ENCODE measurements at regions of chr11 and their contacts with region 1.

Region 1: DNA sequence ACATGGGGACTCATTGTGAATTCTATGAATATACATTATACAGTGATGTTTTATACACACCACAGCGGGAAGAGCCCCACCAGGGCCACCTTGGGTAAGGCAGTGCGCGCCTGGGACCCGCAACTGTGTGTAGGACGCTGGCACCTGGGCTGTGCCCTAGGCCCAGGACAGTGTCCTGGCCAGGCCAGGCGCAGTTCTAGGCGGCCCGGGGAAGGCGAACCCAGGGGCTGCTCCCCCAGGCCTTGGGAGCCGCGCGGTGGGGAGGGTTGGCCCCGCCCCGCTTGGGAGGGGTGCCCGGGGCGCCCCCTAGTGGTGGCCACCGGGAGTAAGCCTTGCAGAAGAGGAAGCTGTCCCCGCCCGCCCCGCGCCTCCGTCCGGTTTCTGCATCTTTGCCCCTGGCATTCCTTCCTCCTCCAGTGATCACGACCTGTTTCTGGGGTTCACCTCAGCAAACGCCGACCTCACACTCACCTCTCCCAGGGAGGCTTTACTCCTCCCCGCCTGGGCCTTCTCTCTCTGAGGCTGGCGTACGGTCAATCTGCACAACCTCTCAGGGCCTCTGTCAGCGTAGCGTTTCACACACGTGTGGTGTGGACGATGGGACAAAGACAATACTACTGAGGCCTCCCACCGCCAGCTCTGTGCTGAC is 9.5 kb upstream of the EHD1 start:
- DNase-seq: no peak
- ATAC-seq: peak; percentile 97
- H3K4me3 ChIP-seq: 0 out of 2 replicates have a peak overlapping the region, but pooled peaks have one; percentile 3
- H3K27ac ChIP-seq: peak overlapping the region; percentile 27; the same call in 1 of the 2 replicates
- H3K4me1 ChIP-seq: peaks cover 12% of the 10 kb centered on the region
- H3K27me3 ChIP-seq: no peaks in the 10 kb centered on the region
- CTCF ChIP-seq: peak; percentile 93 to 96 (median 96)
- EP300 ChIP-seq: no peak
- POLR2A ChIP-seq: no peak
- RAD21 ChIP-seq: peak; percentile 42

Region 2: GRCh38 chr11:64864473-64865285 is 23.2 kb before region 1 on chr11:
- CTCF ChIA-PET with region 1: interaction called, 1,208 read pairs
- POLR2A ChIA-PET with region 1: interaction called, 620 read pairs
- RAD21 ChIA-PET with region 1: interaction called, 253 read pairs
- SMC1A ChIA-PET with region 1: interaction called, 226 read pairs
- in situ Hi-C with region 1: no loop called
- intact Hi-C with region 1: no loop called
- DNase-seq: no peak
- ATAC-seq: peak; percentile 59
- H3K4me3 ChIP-seq: peak overlapping the region; percentile 44
- H3K27ac ChIP-seq: peak overlapping the region; percentile 99
- H3K4me1 ChIP-seq: peaks cover 91% of the 10 kb centered on the region
- H3K27me3 ChIP-seq: no peaks in the 10 kb centered on the region
- CTCF ChIP-seq: no peak
- EP300 ChIP-seq: peak in 1 of 2 experiments; percentile 26; a peak in 2 of 4 replicates
- POLR2A ChIP-seq: peak; percentile 78
- RAD21 ChIP-seq: no peak

Region 3: GRCh38 chr11:64872790-64873488 is 14.9 kb before region 1 on chr11:
- CTCF ChIA-PET with region 1: interaction called, 1,208 read pairs
- POLR2A ChIA-PET with region 1: interaction called, 620 read pairs
- RAD21 ChIA-PET with region 1: interaction called, 253 read pairs
- SMC1A ChIA-PET with region 1: interaction called, 12 read pairs
- in situ Hi-C with region 1: no loop called
- intact Hi-C with region 1: no loop called
- DNase-seq: no peak
- ATAC-seq: peak; percentile 2
- H3K4me3 ChIP-seq: peak overlapping the region; percentile 62
- H3K27ac ChIP-seq: peak overlapping the region; percentile 35
- H3K4me1 ChIP-seq: peaks cover 61% of the 10 kb centered on the region
- H3K27me3 ChIP-seq: no peaks in the 10 kb centered on the region
- CTCF ChIP-seq: no peak
- EP300 ChIP-seq: no peak
- POLR2A ChIP-seq: no peak
- RAD21 ChIP-seq: no peak

Region 4: GRCh38 chr11:64900263-64900678 is 12.4 kb after region 1 on chr11:
- CTCF ChIA-PET with region 1: interaction called, 15 read pairs
- POLR2A ChIA-PET with region 1: no interaction called
- RAD21 ChIA-PET with region 1: interaction called, 4 read pairs
- SMC1A ChIA-PET with region 1: interaction called, 3 read pairs
- in situ Hi-C with region 1: no loop called
- intact Hi-C with region 1: no loop called
- DNase-seq: no peak
- ATAC-seq: peak; percentile 96
- H3K4me3 ChIP-seq: no peak overlapping the region
- H3K27ac ChIP-seq: peak overlapping the region; percentile 46
- H3K4me1 ChIP-seq: peaks cover 9% of the 10 kb centered on the region
- H3K27me3 ChIP-seq: no peaks in the 10 kb centered on the region
- CTCF ChIP-seq: no peak
- EP300 ChIP-seq: 0 out of 4 replicates have a peak, but pooled peaks of 1 of the 2 experiments have one; percentile 19
- POLR2A ChIP-seq: no peak; the same call in 1 of the 2 replicates
- RAD21 ChIP-seq: no peak

Region 5: GRCh38 chr11:65215441-65216076 is 327.7 kb after region 1 on chr11:
- CTCF ChIA-PET with region 1: no interaction called
- POLR2A ChIA-PET with region 1: no interaction called
- RAD21 ChIA-PET with region 1: no interaction called
- SMC1A ChIA-PET with region 1: no interaction called
- in situ Hi-C with region 1: no loop called
- intact Hi-C with region 1: no loop called
- DNase-seq: no peak
- ATAC-seq: no peak
- H3K4me3 ChIP-seq: no peak overlapping the region
- H3K27ac ChIP-seq: no peak overlapping the region
- H3K4me1 ChIP-seq: peaks cover 7% of the 10 kb centered on the region
- H3K27me3 ChIP-seq: no peaks in the 10 kb centered on the region
- CTCF ChIP-seq: no peak
- EP300 ChIP-seq: no peak
- POLR2A ChIP-seq: no peak
- RAD21 ChIP-seq: no peak

Measured in GM12878 (cell line).